ENCODE measurements at regions of chr6 and their contacts with region 1.

Region 1: DNA sequence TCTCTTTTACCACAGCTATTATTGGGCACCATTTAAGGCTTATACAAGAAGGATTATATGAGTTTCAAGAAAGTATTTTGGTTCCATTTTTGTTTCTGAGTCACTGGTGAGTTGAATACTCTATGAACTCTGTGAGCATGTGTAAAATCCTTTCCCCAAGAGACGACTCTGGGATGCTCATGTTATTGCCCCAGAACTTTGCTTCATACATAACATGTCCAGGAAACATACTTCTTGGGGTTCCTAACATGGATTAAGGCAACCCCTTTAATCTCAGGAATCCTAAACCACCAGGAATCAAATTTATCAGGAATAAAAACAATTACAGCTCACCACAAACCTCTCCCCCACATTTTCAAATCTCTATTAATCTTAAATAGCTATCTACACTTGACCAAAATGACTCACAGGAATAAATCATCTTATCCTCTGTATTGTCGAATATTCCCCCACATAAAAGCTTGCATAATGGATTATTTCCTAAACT is 117.5 kb upstream of the COL21A1 start:
- DNase-seq: no peak
- ATAC-seq: no peak
- H3K4me3 ChIP-seq: no peak overlapping the region
- H3K27ac ChIP-seq: no peak overlapping the region
- H3K4me1 ChIP-seq: peaks cover 53% of the 10 kb centered on the region
- H3K27me3 ChIP-seq: no peaks in the 10 kb centered on the region
- CTCF ChIP-seq: no peak
- EP300 ChIP-seq: no peak
- POLR2A ChIP-seq: no peak
- RAD21 ChIP-seq: no peak

Region 2: GRCh38 chr6:56292505-56293181 is 72.2 kb before region 1 on chr6:
- CTCF ChIA-PET with region 1: no interaction called
- POLR2A ChIA-PET with region 1: no interaction called
- in situ Hi-C with region 1: no loop called
- intact Hi-C with region 1: no loop called
- DNase-seq: peak; percentile 62
- ATAC-seq: peak; percentile 96
- H3K4me3 ChIP-seq: no peak overlapping the region
- H3K27ac ChIP-seq: no peak overlapping the region
- H3K4me1 ChIP-seq: no peaks in the 10 kb centered on the region
- H3K27me3 ChIP-seq: peaks cover 0 to 18% of the 10 kb centered on the region in 2 experiments; a peak in 3 of 5 replicates
- CTCF ChIP-seq: peak; percentile 80
- EP300 ChIP-seq: no peak
- POLR2A ChIP-seq: no peak
- RAD21 ChIP-seq: peak; percentile 72

Region 3: DNA sequence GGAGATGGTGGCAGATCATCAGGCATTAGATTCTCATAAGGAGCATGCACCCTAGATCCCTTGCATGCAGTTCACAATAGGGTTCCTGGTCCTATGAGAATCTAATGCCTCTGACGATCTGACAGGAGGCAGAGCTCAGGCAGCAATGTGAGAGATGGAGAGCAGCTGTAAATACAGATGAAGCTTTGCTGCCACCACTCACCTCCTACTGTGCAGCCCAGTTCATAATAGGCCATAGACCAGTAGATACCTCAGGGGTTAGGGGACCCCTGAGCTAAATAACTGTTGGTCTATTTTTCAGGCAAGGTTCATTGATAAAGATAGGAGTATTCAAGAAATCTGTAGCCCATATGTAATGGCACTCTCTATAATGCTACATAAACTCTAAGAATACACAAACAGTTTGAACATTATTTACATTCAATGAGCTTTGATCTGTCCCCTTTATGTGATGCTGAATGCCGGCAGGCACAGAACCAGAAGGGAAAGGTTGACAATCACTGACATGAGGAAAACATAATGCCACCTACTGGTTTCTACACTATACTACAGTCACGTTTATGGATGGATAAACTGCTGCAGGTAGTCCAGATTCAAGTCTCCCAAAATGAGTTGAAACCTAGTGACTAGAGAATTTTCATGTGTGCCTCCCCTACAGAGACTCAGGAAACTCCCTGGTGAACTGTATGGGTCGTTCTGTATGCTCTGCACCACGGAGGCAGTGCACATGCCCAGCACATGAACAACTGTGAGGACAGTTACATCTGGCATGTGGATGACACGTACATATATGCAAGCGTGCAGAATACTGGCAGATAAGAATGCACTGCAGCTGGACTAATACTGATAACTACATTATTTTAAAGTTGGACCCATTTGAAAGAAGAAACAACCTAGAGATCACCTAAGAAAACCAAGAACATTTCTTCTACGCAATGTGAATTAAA is 205.8 kb after region 1 on chr6:
- CTCF ChIA-PET with region 1: interaction called, 20 read pairs
- POLR2A ChIA-PET with region 1: no interaction called
- in situ Hi-C with region 1: loop called (anchors 10 kb)
- intact Hi-C with region 1: loop called (anchors 1 kb)
- DNase-seq: peak; percentile 60
- ATAC-seq: peak; percentile 96
- H3K4me3 ChIP-seq: no peak overlapping the region
- H3K27ac ChIP-seq: no peak overlapping the region
- H3K4me1 ChIP-seq: peaks cover 29% of the 10 kb centered on the region
- H3K27me3 ChIP-seq: no peaks in the 10 kb centered on the region
- CTCF ChIP-seq: peak; percentile 82
- EP300 ChIP-seq: no peak
- POLR2A ChIP-seq: no peak
- RAD21 ChIP-seq: peak; percentile 42; the same call in 1 of the 2 replicates

Region 4: GRCh38 chr6:56742122-56742791 is 377.4 kb after region 1 on chr6:
- CTCF ChIA-PET with region 1: no interaction called
- POLR2A ChIA-PET with region 1: no interaction called
- in situ Hi-C with region 1: no loop called
- intact Hi-C with region 1: loop called (anchors 10 kb)
- DNase-seq: peak; percentile 25
- ATAC-seq: peak; percentile 70
- H3K4me3 ChIP-seq: peak overlapping the region; percentile 39 to 56 (median 42)
- H3K27ac ChIP-seq: peak overlapping the region; percentile 32
- H3K4me1 ChIP-seq: peaks cover 52% of the 10 kb centered on the region
- H3K27me3 ChIP-seq: no peaks in the 10 kb centered on the region
- CTCF ChIP-seq: no peak
- EP300 ChIP-seq: 0 out of 4 replicates have a peak, but pooled peaks of 1 of the 2 experiments have one; percentile 2
- POLR2A ChIP-seq: peak in 1 of 2 experiments; percentile 39; a peak in 1 of 4 replicates
- RAD21 ChIP-seq: no peak

Measured in HepG2 (cell line).